ENCODE measurements at regions of chr5 and their contacts with region 1.

Region 1: DNA sequence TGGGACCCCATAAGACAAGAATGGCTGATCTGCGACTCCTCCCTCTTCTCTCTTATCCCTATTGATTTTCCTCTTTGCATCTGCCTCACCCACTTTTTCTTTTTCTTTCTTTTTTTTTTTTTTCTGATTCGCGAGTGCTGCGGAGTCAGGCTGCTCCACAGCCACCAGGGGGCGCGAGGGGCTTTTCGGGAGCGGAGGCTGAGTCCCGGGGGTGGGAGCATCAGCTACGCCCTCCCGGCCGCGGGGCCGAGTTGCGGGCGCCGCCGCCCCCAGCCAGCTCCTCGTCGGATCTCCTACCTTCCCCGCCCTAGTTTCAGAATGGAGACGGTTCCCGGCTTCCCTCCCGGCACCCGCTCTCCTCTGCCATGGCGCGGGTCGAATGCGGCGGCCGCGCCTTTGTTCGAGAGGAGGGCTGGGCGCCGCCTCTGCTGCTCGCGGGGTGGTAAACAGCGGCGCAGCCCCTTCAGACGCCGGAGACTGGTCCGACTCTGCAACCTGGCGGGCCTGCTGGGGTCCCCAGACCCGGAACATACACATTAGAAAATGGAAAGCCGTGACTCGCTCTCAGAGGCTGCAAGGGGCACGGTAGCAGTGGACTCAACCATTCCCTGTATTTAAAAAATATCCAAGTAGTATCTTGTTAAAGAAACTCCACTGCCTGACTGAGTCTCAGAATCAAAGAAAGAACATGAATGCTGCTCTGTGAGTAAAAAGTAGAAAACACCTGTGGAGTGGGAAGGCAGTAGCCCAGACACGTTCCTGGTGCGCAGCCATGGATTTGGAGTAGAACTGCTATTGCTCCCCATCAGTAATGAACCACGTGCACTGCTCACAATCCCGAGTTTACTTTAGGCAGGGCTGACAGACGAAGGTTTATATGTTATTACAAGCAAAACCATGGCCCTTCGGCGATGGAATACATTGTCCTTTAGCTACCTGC is 55.7 kb downstream of the DPYSL3 start:
- DNase-seq: peak; percentile 95
- H3K4me3 Mint-ChIP-seq: peak overlapping the region; percentile 92
- H3K27ac Mint-ChIP-seq: peak overlapping the region; percentile 0
- H3K4me1 Mint-ChIP-seq: peaks cover 8% of the 10 kb centered on the region
- H3K27me3 Mint-ChIP-seq: peaks cover 21% of the 10 kb centered on the region
- CTCF ChIP-seq: peak; percentile 96

Region 2: DNA sequence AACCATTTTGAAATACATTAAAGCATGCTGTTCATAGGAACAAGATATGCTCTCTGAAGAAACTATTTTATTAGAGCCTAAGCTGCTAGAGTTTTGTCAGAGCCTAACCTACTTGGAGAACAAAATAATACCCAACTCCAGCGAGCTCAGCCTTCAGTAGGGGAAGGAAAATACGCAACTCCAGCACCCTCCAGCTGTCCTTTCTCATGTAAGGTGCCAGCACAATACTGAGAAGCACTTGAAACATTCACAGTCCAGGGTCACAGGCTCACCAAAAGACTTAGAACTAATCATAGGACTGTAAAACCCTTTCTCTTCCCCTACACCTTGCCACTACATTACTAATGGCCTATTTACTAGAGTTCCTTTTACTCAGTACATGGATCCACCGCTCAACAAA is 36.8 kb after region 1 on chr5:
- CTCF ChIA-PET with region 1: no interaction called
- intact Hi-C with region 1: loop called (anchors 1 kb)
- DNase-seq: no peak
- H3K4me3 Mint-ChIP-seq: no peak overlapping the region
- H3K27ac Mint-ChIP-seq: no peak overlapping the region
- H3K4me1 Mint-ChIP-seq: peaks cover 8% of the 10 kb centered on the region
- H3K27me3 Mint-ChIP-seq: no peaks in the 10 kb centered on the region
- CTCF ChIP-seq: no peak

Region 3: DNA sequence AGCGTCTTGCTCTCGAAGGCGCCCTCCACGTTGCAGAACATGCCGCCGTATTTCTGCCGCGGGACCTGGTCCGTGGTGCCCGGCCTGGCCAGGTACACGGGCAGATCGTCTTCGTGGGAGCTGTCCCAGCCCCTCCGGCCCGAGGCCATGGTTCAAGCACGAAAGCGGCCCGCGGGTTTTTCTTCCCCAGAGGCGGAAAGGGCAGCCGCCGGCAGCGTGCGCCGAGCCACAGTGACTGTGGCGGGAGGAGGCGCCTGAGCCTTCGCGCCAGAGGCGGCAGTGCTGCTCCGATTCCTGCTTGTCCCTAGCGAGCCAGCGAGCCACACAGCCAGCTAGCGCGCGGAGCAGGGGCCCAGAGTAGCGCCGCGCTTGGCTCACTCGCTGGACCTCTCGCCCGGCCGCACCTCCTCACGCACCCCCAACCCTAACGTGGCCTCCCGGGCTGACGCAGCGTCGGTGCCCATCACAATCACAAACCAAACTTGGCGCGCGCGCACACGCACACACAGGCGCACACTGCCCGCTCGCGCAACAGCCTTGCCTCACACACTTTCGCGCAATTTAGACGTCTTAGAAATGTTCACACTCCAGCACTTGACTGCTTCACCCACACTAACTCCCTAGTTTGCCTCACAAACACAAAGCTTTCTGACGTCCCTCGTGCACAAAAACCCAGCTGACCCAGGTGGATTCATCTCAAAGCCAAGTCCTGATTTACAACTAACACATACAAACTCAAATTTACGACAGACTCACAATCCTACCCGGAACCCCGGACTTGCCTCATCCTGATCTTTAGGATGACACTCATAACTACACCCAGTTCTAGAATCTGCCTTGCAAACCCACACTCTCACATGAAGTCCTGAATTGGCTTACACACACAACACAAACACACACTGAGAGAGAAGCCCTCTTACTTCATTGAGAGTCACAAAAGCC is 55.8 kb after region 1 on chr5 and contains the start of gene DPYSL3:
- CTCF ChIA-PET with region 1: no interaction called
- intact Hi-C with region 1: loop called (anchors 5 kb)
- DNase-seq: peak; percentile 82
- H3K4me3 Mint-ChIP-seq: peak within 1 kb of the TSS; percentile 99
- H3K27ac Mint-ChIP-seq: peak within 1 kb of the TSS; percentile 62
- H3K4me1 Mint-ChIP-seq: peaks cover 36% of the 10 kb centered on the region
- H3K27me3 Mint-ChIP-seq: no peaks in the 10 kb centered on the region
- CTCF ChIP-seq: peak; percentile 33
- total RNA-seq, gene DPYSL3: 21.4 and 26.6 TPM in 2 replicates